ENCODE measurements at regions of chr17 and their contacts with region 1.

Region 1: GRCh38 chr17:29533976-29534375 is 32.9 kb downstream of the ABHD15 start:
- DNase-seq: no peak
- H3K4me3 ChIP-seq: no peak overlapping the region
- H3K27ac ChIP-seq: no peak overlapping the region
- H3K4me1 ChIP-seq: no peaks in the 10 kb centered on the region
- H3K27me3 ChIP-seq: no peaks in the 10 kb centered on the region
- CTCF ChIP-seq: no peak
- POLR2A ChIP-seq: no peak

Region 2: DNA sequence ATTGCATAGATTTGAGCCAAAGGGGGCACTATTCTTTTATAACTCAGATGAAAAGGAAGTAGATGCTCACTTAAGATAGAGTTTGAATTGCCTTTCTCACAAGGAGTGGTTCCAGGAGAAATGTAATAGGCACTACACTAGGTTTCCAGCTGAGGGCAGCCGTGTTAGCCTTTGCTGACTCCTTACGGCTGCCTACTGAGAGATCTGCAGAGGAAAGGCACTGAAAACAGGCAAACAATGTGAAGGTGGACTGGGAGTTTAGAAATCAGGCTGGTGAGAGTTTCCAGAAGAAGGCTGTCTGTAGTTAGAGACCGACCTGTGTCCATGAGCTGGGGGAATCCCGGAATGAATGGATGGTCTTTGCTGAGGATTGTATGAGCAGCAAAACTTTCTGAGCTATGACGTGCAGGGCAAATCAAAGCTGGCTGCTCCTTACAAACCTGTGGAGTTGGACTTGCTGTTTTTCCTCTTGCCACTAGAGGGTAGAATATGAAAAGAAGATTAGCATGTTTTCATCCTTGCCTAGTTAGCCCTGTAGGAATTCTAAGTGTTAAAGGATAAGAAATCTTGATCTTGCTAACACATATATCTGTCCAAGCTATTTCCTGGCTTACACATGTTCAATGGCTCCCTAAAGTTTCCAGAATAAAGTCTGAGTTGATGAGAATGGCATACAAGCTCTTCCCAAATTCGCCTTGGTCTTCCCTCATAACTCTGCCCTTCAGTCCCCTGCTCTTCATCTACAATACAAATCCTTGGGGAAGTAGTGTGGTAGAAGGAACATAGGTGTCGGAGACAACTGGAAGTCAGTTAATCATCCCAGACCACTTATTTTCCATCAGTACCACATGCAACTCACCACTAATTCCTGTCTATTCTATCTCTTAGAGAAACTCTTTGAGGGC is 163.9 kb before region 1 on chr17:
- intact Hi-C with region 1: loop called (anchors 5 kb)
- DNase-seq: peak; percentile 75
- H3K4me3 ChIP-seq: peak overlapping the region in 2 of 8 donors; percentile 19 to 48
- H3K27ac ChIP-seq: peak overlapping the region in 4 of 8 donors; percentile 33 to 58 (median 36)
- H3K4me1 ChIP-seq: peaks cover 0 to 12% (median 9%) of the 10 kb centered on the region in 6 donors
- H3K27me3 ChIP-seq: no peaks in the 10 kb centered on the region
- CTCF ChIP-seq: peak; percentile 63 to 86 (median 81)
- POLR2A ChIP-seq: no peak

Measured in spleen (tissue), 13 donors.